ENCODE measurements at regions of chr2 and their contacts with region 1.

Region 1: GRCh38 chr2:138333677-138334076 is 167.9 kb upstream of the SPOPL start:
- DNase-seq: no peak
- H3K4me3 ChIP-seq: no peak overlapping the region
- H3K27ac ChIP-seq: no peak overlapping the region
- H3K4me1 ChIP-seq: peaks cover 3% of the 10 kb centered on the region
- H3K27me3 ChIP-seq: no peaks in the 10 kb centered on the region
- CTCF ChIP-seq: no peak
- EP300 ChIP-seq: no peak
- POLR2A ChIP-seq: no peak

Region 2: DNA sequence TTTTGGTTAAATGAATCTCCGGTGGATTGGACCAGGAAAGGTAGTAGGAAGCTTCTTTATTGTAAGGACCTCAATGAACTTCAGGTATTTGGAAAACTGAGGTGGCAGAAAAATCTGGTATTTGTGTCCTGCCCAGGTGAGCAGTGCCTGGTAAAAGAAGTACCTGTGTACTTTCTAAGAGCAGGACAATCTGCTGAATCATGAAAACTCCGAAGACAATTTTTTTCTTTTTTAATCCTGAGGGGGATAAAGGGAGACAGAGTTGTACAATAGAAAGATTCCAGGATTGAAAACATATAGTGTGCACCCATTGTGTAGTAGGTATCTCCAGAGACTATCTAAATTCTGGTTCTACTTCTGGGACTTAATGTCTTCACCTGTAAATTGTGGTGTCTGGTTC is 23.9 kb before region 1 on chr2:
- intact Hi-C with region 1: loop called in 1 of 4 experiments (anchors 2 kb)
- DNase-seq: no peak
- H3K4me3 ChIP-seq: no peak overlapping the region
- H3K27ac ChIP-seq: no peak overlapping the region
- H3K4me1 ChIP-seq: no peaks in the 10 kb centered on the region
- H3K27me3 ChIP-seq: no peaks in the 10 kb centered on the region
- CTCF ChIP-seq: no peak
- EP300 ChIP-seq: no peak
- POLR2A ChIP-seq: no peak

Region 3: GRCh38 chr2:138381373-138381772 is 47.7 kb after region 1 on chr2:
- intact Hi-C with region 1: no loop called
- DNase-seq: no peak
- H3K4me3 ChIP-seq: no peak overlapping the region
- H3K27ac ChIP-seq: no peak overlapping the region
- H3K4me1 ChIP-seq: no peaks in the 10 kb centered on the region
- H3K27me3 ChIP-seq: no peaks in the 10 kb centered on the region
- CTCF ChIP-seq: no peak
- EP300 ChIP-seq: no peak
- POLR2A ChIP-seq: no peak